ENCODE measurements at regions of chr2 and their contacts with region 1.

Region 1: GRCh38 chr2:72150157-72150865 is 2.6 kb upstream of the CYP26B1 start:
- DNase-seq: peak; percentile 68
- ATAC-seq: peak; percentile 81

Region 2: GRCh38 chr2:71545572-71546274 is 604.6 kb before region 1 on chr2:
- intact Hi-C with region 1: loop called (anchors 2 kb)
- DNase-seq: no peak
- ATAC-seq: peak; percentile 81

Region 3: DNA sequence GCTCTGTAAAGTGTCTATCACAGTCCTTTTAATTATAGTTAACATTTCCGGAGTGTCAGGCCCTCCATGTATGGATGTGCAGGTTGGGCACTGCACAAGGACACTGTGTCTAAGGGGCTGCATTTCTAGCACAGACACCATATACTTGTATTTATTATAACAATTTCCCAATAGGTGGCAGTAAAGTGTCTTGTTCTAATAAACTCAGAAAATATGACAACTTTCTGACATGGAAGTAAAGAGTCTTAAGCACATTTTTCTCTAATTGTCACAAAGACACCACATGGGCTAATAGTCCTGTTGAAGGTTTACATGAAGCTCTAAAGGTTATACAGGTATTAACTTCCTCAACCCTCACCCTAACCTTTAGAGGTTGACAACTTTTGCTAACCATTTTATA is 540.4 kb before region 1 on chr2:
- intact Hi-C with region 1: loop called (anchors 10 kb)
- DNase-seq: no peak
- ATAC-seq: no peak

Region 4: GRCh38 chr2:72198532-72199241 is 48.4 kb after region 1 on chr2:
- intact Hi-C with region 1: no loop called
- DNase-seq: no peak
- ATAC-seq: peak; percentile 67